Upper lobe of right lung (tissue), 1 donor: ENCODE measurements at regions of chr14 and their contacts with region 1.

Region 1: GRCh38 chr14:25150934-25151790 is 101.2 kb upstream of the STXBP6 start:
- DNase-seq: no peak
- ATAC-seq: peak; percentile 61
- H3K4me3 ChIP-seq: no peak overlapping the region
- H3K27ac ChIP-seq: no peak overlapping the region
- H3K4me1 ChIP-seq: no peaks in the 10 kb centered on the region
- H3K27me3 ChIP-seq: peaks cover 4% of the 10 kb centered on the region
- CTCF ChIP-seq: peak; percentile 87

Region 2: GRCh38 chr14:24734878-24735500 is 416.2 kb before region 1 on chr14:
- intact Hi-C with region 1: loop called (anchors 10 kb)
- DNase-seq: no peak
- ATAC-seq: peak; percentile 79
- H3K4me3 ChIP-seq: no peak overlapping the region
- H3K27ac ChIP-seq: no peak overlapping the region
- H3K4me1 ChIP-seq: no peaks in the 10 kb centered on the region
- H3K27me3 ChIP-seq: no peaks in the 10 kb centered on the region
- CTCF ChIP-seq: peak; percentile 78